Mammary epithelial cell (primary cell): ENCODE measurements at regions of chr2 and their contacts with region 1.

Region 1: GRCh38 chr2:74529357-74530238 is at the starts of genes AUP1 and HTRA2:
- DNase-seq: peak; percentile 100
- H3K4me3 ChIP-seq: peak within 1 kb of the TSS; percentile 58 to 81 (median 66)
- H3K27ac ChIP-seq: peak within 1 kb of the TSS; percentile 79
- H3K4me1 ChIP-seq: peaks cover 38% of the 10 kb centered on the region
- H3K27me3 ChIP-seq: no peaks in the 10 kb centered on the region
- CTCF ChIP-seq: no peak
- total RNA-seq, gene AUP1: 67.5 to 111 TPM
- total RNA-seq, gene HTRA2: 29.2 to 30.8 TPM

Region 2: DNA sequence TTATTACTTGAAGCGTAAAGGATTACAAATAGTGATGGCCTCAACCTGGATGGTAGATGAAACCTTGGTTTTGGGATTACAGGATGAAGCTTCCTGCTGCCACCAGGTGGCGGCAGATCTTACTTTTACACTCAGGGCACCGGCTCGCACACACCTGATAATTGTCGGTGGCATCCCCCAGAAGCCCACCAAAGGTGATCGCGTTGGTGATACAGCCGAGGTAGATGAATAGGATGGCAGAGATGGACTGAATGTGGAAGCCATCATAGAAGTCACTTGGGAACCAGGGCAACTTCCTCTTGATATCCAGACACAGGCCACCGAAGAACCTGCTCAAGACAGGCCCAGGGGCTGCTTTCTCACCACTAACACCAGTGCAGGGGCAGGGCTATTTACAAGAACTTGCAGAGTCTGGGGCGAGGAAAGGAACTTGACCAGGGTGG is 279.4 kb before region 1 on chr2:
- CTCF ChIA-PET with region 1: no interaction called
- dilution Hi-C with region 1: no loop called
- in situ Hi-C with region 1: no loop called
- intact Hi-C with region 1: loop called (anchors 1 kb)
- DNase-seq: peak; percentile 9
- H3K4me3 ChIP-seq: no peak overlapping the region
- H3K27ac ChIP-seq: no peak overlapping the region
- H3K4me1 ChIP-seq: no peaks in the 10 kb centered on the region
- H3K27me3 ChIP-seq: no peaks in the 10 kb centered on the region
- CTCF ChIP-seq: peak; percentile 71 to 80

Region 3: GRCh38 chr2:74482801-74483674 is 46.6 kb before region 1 on chr2 and contains the starts of genes CCDC142 and TTC31:
- CTCF ChIA-PET with region 1: interaction called, 6 read pairs
- dilution Hi-C with region 1: no loop called
- in situ Hi-C with region 1: loop called in 1 of 2 experiments (anchors 5 kb)
- intact Hi-C with region 1: loop called (anchors 1 kb)
- DNase-seq: peak; percentile 94
- H3K4me3 ChIP-seq: peak within 1 kb of the TSS; percentile 59 to 75 (median 75)
- H3K27ac ChIP-seq: peak within 1 kb of the TSS; percentile 71
- H3K4me1 ChIP-seq: peaks cover 27% of the 10 kb centered on the region
- H3K27me3 ChIP-seq: no peaks in the 10 kb centered on the region
- CTCF ChIP-seq: peak; percentile 91 to 94
- total RNA-seq, gene CCDC142: 13.0 to 18.2 TPM
- total RNA-seq, gene TTC31: 11.5 to 22.0 TPM

Region 4: DNA sequence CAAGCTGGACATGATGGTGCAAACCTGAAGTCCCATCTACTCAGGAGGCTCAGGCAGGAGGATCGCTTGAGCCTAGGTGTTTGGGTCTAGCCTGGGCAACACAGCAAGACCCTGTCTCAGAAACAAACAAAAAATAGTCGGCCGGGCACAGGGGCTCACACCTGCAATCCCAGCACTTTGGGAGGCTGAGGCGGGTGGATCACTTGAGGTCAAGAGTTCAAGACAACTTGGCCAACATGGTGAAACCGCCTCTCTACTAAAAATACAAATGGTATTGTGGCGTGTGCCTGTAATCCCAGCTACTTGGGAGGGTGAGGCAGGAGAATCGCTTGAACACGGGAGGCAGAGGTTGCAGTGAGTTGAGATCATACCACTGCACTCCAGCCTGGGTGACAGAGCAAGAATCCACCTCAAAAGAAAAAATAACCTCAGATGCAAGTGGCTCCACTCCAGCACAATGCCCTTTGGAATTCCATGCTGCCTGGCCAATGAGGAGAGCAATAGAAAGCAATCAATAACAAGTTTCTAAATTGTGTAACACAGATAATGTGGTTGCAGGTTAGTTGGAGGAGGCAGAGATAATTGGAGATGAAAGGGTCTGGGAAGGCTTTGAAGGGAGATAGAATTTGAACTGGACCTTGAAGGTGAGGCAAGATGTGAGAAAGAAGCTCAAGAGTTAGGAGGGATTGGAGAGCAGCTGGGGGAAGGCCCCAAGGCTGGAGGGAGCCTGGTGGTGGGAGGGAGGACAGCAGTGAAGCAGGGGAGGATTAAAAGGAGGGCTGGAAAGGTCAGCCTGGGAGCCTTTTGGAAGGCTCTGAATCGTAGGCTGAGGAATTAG is 40.7 kb before region 1 on chr2:
- CTCF ChIA-PET with region 1: no interaction called
- dilution Hi-C with region 1: no loop called
- in situ Hi-C with region 1: loop called in 1 of 2 experiments (anchors 5 kb)
- intact Hi-C with region 1: loop called (anchors 1 kb)
- DNase-seq: no peak
- H3K4me3 ChIP-seq: no peak overlapping the region
- H3K27ac ChIP-seq: no peak overlapping the region
- H3K4me1 ChIP-seq: peaks cover 17% of the 10 kb centered on the region
- H3K27me3 ChIP-seq: no peaks in the 10 kb centered on the region
- CTCF ChIP-seq: no peak

Region 5: DNA sequence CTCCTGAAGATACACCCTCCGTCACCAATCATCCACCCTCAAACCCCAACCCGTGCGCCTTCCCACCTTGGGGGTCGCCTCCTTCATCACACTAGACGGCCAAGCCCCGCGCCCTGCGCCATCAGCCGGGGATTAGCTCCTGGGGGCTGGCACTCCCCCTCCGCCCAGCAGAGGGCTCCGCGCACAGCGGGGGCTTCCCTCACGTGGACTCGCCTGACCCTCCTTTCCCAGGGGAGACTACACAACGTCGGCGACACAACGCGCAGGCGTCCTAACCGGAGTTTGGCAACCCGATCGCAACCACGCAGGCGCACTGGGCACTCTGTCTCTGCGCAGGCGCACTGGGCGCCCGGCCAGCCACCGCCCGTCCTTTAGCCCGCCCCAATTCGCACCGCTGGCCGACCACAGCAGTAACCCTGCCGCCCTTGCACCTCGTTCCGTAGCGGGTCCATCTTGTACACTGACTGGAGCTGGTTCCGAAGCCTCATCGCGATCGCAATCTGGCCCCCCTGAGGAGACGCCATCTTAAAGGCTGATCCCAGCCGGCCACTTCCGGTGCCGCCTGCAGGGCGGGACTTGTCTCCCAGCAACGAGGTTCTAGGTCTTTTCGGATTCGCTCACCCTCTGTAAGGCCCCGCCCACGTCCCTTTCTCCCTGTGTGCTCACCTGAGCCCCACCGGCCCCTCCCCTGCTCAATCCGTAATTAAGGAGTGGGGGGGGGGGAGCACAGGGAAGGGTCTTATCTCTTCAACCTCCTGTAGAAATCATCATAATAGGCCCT is 22.3 kb before region 1 on chr2 and contains the start of gene PCGF1:
- CTCF ChIA-PET with region 1: no interaction called
- dilution Hi-C with region 1: no loop called
- in situ Hi-C with region 1: no loop called
- intact Hi-C with region 1: loop called (anchors 1 kb)
- DNase-seq: peak; percentile 95
- H3K4me3 ChIP-seq: peak within 1 kb of the TSS; percentile 81 to 100 (median 90)
- H3K27ac ChIP-seq: peak within 1 kb of the TSS; percentile 86
- H3K4me1 ChIP-seq: peaks cover 36% of the 10 kb centered on the region
- H3K27me3 ChIP-seq: no peaks in the 10 kb centered on the region
- CTCF ChIP-seq: peak; percentile 11 to 13
- total RNA-seq, gene PCGF1: 20.0 to 35.4 TPM